ENCODE measurements at regions of chr10 and their contacts with region 1.

Region 1: GRCh38 chr10:35005868-35006267 is 84.3 kb downstream of the CUL2 start:
- DNase-seq: peak; percentile 100
- ATAC-seq: peak; percentile 81
- H3K4me3 ChIP-seq: no peak overlapping the region
- H3K27ac ChIP-seq: peak overlapping the region; percentile 82
- H3K4me1 ChIP-seq: peaks cover 52% of the 10 kb centered on the region
- H3K27me3 ChIP-seq: no peaks in the 10 kb centered on the region
- CTCF ChIP-seq: no peak

Region 2: DNA sequence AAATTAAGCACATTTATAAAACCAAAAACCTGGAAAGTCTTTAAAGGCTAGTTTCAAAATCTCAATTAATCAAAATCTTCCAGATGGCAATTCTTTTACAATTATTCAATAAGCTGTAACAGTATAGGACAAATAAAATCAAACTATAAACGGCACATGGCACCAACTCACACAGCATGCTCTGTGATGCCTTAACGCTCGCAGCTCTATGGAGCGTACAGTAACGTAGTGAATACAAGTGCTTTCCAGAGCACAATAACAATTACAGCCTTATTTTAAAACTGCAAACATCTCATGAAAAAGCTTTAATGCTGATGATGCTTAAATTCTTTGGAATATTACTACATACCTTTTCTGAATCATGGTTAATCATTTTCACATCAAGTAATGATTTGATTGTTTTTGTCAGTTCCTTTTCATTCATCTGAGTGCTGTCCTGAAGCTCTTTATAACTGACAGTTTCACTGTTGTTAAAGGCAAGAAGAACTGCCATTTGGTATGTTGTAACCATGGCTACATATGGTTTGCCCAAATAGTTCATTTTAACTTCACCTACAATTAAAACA is 10.1 kb after region 1 on chr10:
- CTCF ChIA-PET with region 1: interaction called, 3 read pairs
- POLR2A ChIA-PET with region 1: interaction called, 7 read pairs
- intact Hi-C with region 1: loop called (anchors 1 kb)
- DNase-seq: peak; percentile 59
- ATAC-seq: peak; percentile 44
- H3K4me3 ChIP-seq: no peak overlapping the region
- H3K27ac ChIP-seq: peak overlapping the region; percentile 25
- H3K4me1 ChIP-seq: peaks cover 29% of the 10 kb centered on the region
- H3K27me3 ChIP-seq: no peaks in the 10 kb centered on the region
- CTCF ChIP-seq: no peak

Region 3: DNA sequence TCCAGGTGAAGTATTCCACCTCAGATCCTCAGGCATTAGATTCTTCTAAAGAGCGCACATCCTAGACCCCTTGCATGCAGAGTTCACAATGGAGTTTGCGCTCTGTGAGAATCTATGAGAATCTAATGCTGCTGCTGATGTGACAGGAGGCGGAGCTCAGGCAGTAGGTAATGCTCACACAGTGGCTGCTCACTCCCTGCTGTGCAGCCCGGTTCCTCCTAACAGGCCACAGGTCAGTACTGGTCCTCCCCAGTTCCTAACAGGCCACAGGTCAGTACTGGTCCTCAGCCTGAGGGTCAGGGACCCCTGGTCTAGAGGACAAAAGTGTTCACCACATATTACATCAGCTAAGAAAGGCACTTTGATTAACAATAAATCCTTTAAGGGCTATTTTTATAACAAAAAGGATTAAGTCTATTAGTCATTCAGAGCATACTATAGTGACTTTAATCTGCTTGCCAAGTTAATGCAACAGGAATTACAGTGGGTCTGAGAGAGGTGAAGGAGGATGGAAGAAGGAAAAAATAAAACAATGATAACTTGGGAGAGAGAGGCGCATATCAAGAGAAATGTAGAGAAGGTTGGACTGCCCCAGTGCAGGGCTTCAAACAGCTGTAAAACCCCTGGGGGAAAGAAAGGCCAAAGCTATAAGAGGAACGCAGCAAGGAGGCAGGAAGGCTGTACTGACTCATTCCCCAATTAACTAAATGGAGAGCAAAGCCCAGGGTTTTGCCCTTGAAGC is 35.1 kb after region 1 on chr10:
- CTCF ChIA-PET with region 1: interaction called, 3 read pairs
- POLR2A ChIA-PET with region 1: no interaction called
- intact Hi-C with region 1: loop called (anchors 1 kb)
- DNase-seq: peak; percentile 72
- ATAC-seq: peak; percentile 77
- H3K4me3 ChIP-seq: no peak overlapping the region
- H3K27ac ChIP-seq: peak overlapping the region; percentile 49
- H3K4me1 ChIP-seq: peaks cover 46% of the 10 kb centered on the region
- H3K27me3 ChIP-seq: no peaks in the 10 kb centered on the region
- CTCF ChIP-seq: no peak

Region 4: DNA sequence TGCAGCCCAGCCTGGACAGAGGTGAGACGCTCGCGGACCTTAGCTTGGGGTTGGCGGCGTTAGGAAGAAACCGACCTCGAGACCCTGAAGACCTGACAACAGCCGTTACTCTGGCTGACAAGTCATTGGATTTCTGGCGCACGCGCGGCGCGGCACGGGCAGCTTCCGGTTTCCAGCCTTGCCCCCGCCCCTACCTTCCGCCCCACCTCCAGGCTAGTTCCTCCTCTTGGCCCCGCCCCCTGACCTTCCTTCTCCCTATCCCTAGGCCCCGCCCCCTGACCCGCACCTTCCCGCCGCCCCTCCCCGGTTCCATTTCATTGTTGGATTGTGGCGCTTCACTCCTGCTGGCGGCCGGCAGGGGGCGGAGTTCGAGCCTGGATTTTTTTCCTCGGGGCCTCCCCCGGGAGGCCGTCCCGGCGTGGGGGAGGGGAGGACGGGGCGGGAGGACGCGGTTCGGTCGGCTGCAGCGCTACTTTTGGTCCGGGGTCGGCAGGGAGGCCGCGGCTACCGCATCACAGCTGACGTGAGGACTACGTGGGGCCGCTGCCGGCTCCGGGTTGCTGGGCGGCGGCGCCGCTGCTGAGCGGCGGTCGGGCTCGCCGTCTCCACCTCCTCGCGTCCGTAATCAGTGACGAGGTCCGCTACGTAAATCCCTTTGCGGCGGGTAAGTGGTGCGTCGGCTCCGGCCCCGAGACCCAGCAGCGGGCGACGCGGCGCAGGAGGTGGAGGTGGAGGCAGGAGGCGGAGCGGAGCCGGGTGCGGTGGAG is 120.8 kb after region 1 on chr10 and contains the start of gene CREM:
- CTCF ChIA-PET with region 1: no interaction called
- POLR2A ChIA-PET with region 1: no interaction called
- intact Hi-C with region 1: loop called (anchors 1 kb)
- DNase-seq: peak; percentile 100
- ATAC-seq: peak; percentile 80
- H3K4me3 ChIP-seq: peak within 1 kb of the TSS; percentile 74
- H3K27ac ChIP-seq: peak within 1 kb of the TSS; percentile 87
- H3K4me1 ChIP-seq: peaks cover 41% of the 10 kb centered on the region
- H3K27me3 ChIP-seq: no peaks in the 10 kb centered on the region
- CTCF ChIP-seq: peak; percentile 99
- total RNA-seq, gene CREM: 150 and 195 TPM in 2 replicates

Region 5: DNA sequence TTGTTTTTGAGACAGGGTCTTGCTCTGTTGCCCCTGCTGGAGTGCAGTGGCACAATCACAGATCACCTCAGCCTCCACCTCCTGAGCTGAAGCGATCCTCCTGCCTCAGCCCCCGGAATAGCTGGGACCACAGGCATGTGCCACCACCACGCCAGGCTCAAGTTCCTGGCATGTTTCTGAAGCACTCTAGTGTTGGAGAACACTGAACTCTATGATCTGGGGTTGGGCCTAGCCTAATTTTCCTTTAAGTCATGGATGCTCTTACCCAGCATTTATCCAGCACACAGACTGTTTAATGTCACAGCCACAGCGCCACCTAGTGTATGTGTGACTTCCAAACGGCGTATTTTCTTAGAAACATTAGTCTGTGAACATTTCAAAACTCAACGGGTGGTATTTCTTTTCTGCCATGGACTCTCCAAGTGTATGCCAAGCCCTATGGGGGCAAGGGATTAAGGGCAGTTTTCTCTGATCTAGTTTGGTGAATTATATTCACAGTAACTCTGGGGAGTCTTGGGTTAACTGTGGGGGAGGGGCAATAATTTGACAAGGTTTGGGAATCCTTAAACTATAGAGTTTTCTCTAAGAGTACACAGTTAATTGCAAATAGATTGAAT is 212.6 kb after region 1 on chr10:
- CTCF ChIA-PET with region 1: no interaction called
- POLR2A ChIA-PET with region 1: no interaction called
- intact Hi-C with region 1: loop called (anchors 5 kb)
- DNase-seq: peak; percentile 100
- ATAC-seq: peak; percentile 86
- H3K4me3 ChIP-seq: peak overlapping the region; percentile 5; the same call in 1 of the 2 replicates
- H3K27ac ChIP-seq: no peak overlapping the region
- H3K4me1 ChIP-seq: no peaks in the 10 kb centered on the region
- H3K27me3 ChIP-seq: no peaks in the 10 kb centered on the region
- CTCF ChIP-seq: peak; percentile 100